Activated CD8-positive, alpha-beta T cell treated with anti-CD3 and anti-CD28 coated beads, Interleukin-2, amount 10 ng/mL, durations not matched to agents 7 days and 5 days (primary cell): ENCODE measurements at regions of chr1 and their contacts with region 1.

Region 1: GRCh38 chr1:89719502-89720306 is 86.8 kb downstream of the LRRC8C start:
- DNase-seq: no peak
- ATAC-seq: peak; percentile 82
- H3K4me3 Mint-ChIP-seq: peak overlapping the region; percentile 61
- H3K27ac Mint-ChIP-seq: peak overlapping the region; percentile 97
- H3K4me1 Mint-ChIP-seq: peaks cover 83% of the 10 kb centered on the region
- H3K27me3 Mint-ChIP-seq: no peaks in the 10 kb centered on the region

Region 2: GRCh38 chr1:89615676-89616598 is 103.8 kb before region 1 on chr1:
- CTCF ChIA-PET with region 1: interaction called, 29 read pairs
- POLR2A ChIA-PET with region 1: interaction called, 4 read pairs
- DNase-seq: no peak
- ATAC-seq: no peak
- H3K4me3 Mint-ChIP-seq: no peak overlapping the region
- H3K27ac Mint-ChIP-seq: no peak overlapping the region
- H3K4me1 Mint-ChIP-seq: peaks cover 63% of the 10 kb centered on the region
- H3K27me3 Mint-ChIP-seq: no peaks in the 10 kb centered on the region

Region 3: DNA sequence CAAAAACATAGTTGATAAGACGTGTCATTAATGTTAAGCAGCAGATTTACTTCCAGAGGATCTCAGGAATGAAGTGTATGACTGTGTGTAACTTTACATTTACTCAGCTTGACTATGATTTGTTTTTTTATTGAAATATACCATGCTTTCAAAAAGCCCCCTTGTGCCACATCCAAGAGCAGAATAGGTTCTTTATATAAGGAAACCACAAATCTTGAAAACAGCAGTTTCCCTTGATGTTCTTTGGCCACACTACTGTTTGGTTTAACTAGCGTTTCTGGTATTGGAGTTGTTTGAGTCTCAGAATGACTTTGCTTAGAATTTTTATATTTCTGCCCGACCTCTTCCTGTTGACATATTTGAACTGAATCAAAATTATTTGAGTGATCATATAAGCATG is 61.8 kb before region 1 on chr1:
- CTCF ChIA-PET with region 1: interaction called, 18 read pairs
- POLR2A ChIA-PET with region 1: interaction called, 5 read pairs
- DNase-seq: peak; percentile 59
- ATAC-seq: peak; percentile 84
- H3K4me3 Mint-ChIP-seq: peak overlapping the region; percentile 60
- H3K27ac Mint-ChIP-seq: peak overlapping the region; percentile 79
- H3K4me1 Mint-ChIP-seq: peaks cover 92% of the 10 kb centered on the region
- H3K27me3 Mint-ChIP-seq: no peaks in the 10 kb centered on the region

Region 4: GRCh38 chr1:89706700-89707012 is 13.0 kb before region 1 on chr1:
- CTCF ChIA-PET with region 1: interaction called, 26 read pairs
- POLR2A ChIA-PET with region 1: interaction called, 3 read pairs
- DNase-seq: no peak
- ATAC-seq: no peak
- H3K4me3 Mint-ChIP-seq: no peak overlapping the region
- H3K27ac Mint-ChIP-seq: peak overlapping the region; percentile 9
- H3K4me1 Mint-ChIP-seq: peaks cover 50% of the 10 kb centered on the region
- H3K27me3 Mint-ChIP-seq: no peaks in the 10 kb centered on the region

Region 5: GRCh38 chr1:89757532-89757931 is 37.8 kb after region 1 on chr1:
- CTCF ChIA-PET with region 1: interaction called, 89 read pairs
- POLR2A ChIA-PET with region 1: interaction called, 15 read pairs
- DNase-seq: peak; percentile 71
- ATAC-seq: peak; percentile 77
- H3K4me3 Mint-ChIP-seq: peak overlapping the region; percentile 73
- H3K27ac Mint-ChIP-seq: peak overlapping the region; percentile 92
- H3K4me1 Mint-ChIP-seq: peaks cover 89% of the 10 kb centered on the region
- H3K27me3 Mint-ChIP-seq: no peaks in the 10 kb centered on the region

Region 6: GRCh38 chr1:89873770-89874169 is 154.1 kb after region 1 on chr1:
- CTCF ChIA-PET with region 1: no interaction called
- POLR2A ChIA-PET with region 1: no interaction called
- DNase-seq: no peak
- ATAC-seq: peak; percentile 47
- H3K4me3 Mint-ChIP-seq: no peak overlapping the region
- H3K27ac Mint-ChIP-seq: no peak overlapping the region
- H3K4me1 Mint-ChIP-seq: peaks cover 24% of the 10 kb centered on the region
- H3K27me3 Mint-ChIP-seq: no peaks in the 10 kb centered on the region

Region 7: GRCh38 chr1:90083995-90084394 is 364.3 kb after region 1 on chr1:
- CTCF ChIA-PET with region 1: no interaction called
- POLR2A ChIA-PET with region 1: no interaction called
- DNase-seq: no peak
- ATAC-seq: no peak
- H3K4me3 Mint-ChIP-seq: no peak overlapping the region
- H3K27ac Mint-ChIP-seq: no peak overlapping the region
- H3K4me1 Mint-ChIP-seq: no peaks in the 10 kb centered on the region
- H3K27me3 Mint-ChIP-seq: peaks cover 17% of the 10 kb centered on the region